Tibial artery (tissue), 4 donors: ENCODE measurements at regions of chr20 and their contacts with region 1.

Region 1: GRCh38 chr20:63707549-63708300 is at the starts of genes ARFRP1 and ZGPAT:
- DNase-seq: peak; percentile 85 to 93
- H3K4me3 ChIP-seq: peak within 1 kb of the TSS; percentile 82 to 83
- H3K27ac ChIP-seq: peak within 1 kb of the TSS; percentile 76 to 86
- H3K4me1 ChIP-seq: peaks cover 0 to 40% (median 28%) of the 10 kb centered on the region in 4 donors
- H3K27me3 ChIP-seq: no peaks in the 10 kb centered on the region
- CTCF ChIP-seq: no peak

Region 2: DNA sequence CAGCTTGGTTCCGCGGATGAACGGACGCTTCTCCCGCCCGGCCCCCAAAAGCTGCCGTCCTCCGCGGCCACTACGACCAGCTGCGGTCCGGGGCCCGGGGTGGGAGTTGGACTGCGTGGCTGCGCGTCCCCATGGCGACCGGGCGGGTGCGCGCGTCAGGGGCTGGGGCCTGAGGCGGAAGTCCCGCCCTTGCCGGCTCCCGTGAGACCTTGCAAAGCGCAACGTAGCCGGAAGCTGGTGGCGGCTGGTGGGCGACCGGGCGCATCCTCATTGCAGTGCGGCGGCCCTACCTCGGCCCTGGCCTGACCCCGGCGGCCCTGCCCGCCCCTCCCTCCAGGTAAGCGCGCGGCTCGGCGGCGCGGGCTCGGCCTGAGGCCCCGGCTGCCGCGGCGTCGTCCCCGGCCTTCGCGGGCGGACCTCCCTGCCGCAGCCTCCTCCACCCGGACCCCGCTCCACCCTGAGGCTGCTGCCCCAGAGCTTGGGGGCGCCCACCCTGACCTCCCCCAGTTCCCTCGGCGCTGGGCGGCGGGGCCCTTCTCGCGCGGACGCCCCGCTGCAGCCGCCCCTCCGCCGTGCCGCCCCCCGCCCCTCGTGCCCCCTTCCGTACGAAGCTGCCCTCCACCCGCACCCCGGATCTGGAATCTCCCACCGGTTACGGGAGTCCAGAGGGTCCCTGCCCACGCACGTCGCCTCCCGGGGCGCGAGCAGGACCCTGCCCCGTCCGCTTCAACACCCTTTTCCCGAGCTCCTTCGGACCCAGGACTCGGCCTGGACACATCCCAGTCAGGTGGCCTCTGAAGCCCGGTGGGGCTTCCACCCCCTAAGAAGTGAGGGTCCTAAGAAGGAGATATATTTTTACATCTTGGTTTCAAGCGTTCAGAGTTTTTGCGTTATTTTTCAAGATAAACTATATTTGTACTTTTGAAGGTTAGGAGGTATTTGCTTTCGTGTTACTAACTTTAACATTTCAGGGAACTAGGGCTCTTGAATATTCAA is 434.8 kb before region 1 on chr20 and contains the start of gene ARFGAP1:
- intact Hi-C with region 1: no loop called
- DNase-seq: peak; percentile 84 to 93
- H3K4me3 ChIP-seq: peak within 1 kb of the TSS; percentile 90 to 100
- H3K27ac ChIP-seq: peak within 1 kb of the TSS; percentile 70 to 83
- H3K4me1 ChIP-seq: peaks cover 0 to 28% (median 23%) of the 10 kb centered on the region in 4 donors
- H3K27me3 ChIP-seq: peaks cover 0 to 8% of the 10 kb centered on the region in 2 donors
- CTCF ChIP-seq: no peak

Region 3: GRCh38 chr20:63602321-63602720 is 105.4 kb before region 1 on chr20:
- intact Hi-C with region 1: no loop called
- DNase-seq: no peak
- H3K4me3 ChIP-seq: no peak overlapping the region
- H3K27ac ChIP-seq: no peak overlapping the region
- H3K4me1 ChIP-seq: no peaks in the 10 kb centered on the region
- H3K27me3 ChIP-seq: no peaks in the 10 kb centered on the region
- CTCF ChIP-seq: no peak

Region 4: DNA sequence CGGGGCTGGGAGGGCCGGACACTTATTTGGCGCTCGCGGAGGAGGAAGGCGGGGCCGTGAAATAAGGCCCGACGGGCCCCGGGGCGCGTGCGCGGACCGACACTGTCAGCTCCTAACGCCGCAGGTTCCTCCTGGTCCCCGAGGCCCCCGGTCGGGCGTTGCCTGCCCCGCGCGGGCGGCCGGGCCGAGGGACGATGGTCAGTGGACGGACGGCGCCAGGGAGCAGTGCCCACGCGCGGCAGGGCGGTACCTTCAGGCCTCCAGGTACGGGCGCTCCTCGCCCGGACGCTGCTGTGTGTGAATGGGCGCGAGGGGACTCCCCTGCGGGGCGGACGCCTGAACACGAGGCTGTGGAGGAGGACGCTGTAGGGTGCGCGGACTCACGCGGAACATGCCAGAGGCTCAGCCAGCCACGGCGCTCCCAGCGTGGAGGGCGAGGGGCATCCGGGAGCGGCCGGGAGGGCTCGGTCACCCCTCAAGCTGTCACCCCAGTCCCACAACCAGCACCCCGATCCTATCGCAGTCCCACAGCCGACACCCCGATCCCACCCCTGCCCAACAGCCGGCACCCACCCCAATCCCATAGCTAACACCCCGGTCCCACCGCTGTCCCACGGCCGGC is 80.5 kb before region 1 on chr20:
- intact Hi-C with region 1: loop called (anchors 5 kb)
- DNase-seq: peak; percentile 92 to 96
- H3K4me3 ChIP-seq: peak overlapping the region; percentile 74 to 75
- H3K27ac ChIP-seq: peak overlapping the region; percentile 93 to 97
- H3K4me1 ChIP-seq: peaks cover 0 to 27% (median 20%) of the 10 kb centered on the region in 4 donors
- H3K27me3 ChIP-seq: no peaks in the 10 kb centered on the region
- CTCF ChIP-seq: no peak

Region 5: DNA sequence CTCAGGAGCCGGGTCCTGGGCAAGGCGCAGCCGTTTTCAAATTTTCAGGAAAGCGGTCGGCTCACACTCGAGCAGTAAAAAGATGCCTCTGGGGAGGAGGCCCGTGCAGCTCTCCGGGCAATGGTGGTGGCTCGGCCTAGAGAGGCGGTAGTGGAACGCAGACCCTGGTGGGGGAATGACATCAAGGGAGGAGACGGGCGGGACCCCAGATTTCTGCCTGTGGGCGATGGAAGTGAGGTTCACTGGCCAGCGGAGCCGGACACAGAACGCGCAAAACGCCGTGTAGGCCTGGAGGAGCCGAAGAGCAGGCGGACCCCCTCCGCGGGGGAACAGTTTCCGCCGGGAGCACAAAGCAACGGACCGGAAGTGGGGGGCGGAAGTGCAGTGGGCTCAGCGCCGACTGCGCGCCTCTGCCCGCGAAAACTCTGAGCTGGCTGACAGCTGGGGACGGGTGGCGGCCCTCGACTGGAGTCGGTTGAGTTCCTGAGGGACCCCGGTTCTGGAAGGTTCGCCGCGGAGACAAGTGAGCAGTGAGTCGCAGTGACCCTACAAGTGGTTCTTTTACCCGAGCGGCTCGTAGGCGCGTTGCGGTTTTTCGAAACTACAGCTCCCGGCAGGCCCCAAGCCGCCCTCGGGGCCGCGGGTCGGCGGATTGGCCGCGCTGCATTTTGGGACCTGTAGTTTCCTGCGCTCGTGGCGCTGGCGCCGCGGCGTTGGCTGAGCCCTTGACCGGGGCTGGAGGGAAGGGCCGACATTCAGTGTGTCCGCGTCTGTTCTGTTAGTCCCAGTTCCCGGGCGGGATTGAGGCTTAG is 49.6 kb before region 1 on chr20 and contains the start of gene RTEL1:
- intact Hi-C with region 1: loop called (anchors 5 kb)
- DNase-seq: peak; percentile 91 to 95
- H3K4me3 ChIP-seq: peak within 1 kb of the TSS; percentile 64 to 76
- H3K27ac ChIP-seq: peak within 1 kb of the TSS; percentile 81 to 86
- H3K4me1 ChIP-seq: peaks cover 0 to 42% (median 30%) of the 10 kb centered on the region in 4 donors
- H3K27me3 ChIP-seq: peaks cover 0 to 5% of the 10 kb centered on the region in 2 donors
- CTCF ChIP-seq: peak in 1 of 2 experiments; percentile 45

Region 6: DNA sequence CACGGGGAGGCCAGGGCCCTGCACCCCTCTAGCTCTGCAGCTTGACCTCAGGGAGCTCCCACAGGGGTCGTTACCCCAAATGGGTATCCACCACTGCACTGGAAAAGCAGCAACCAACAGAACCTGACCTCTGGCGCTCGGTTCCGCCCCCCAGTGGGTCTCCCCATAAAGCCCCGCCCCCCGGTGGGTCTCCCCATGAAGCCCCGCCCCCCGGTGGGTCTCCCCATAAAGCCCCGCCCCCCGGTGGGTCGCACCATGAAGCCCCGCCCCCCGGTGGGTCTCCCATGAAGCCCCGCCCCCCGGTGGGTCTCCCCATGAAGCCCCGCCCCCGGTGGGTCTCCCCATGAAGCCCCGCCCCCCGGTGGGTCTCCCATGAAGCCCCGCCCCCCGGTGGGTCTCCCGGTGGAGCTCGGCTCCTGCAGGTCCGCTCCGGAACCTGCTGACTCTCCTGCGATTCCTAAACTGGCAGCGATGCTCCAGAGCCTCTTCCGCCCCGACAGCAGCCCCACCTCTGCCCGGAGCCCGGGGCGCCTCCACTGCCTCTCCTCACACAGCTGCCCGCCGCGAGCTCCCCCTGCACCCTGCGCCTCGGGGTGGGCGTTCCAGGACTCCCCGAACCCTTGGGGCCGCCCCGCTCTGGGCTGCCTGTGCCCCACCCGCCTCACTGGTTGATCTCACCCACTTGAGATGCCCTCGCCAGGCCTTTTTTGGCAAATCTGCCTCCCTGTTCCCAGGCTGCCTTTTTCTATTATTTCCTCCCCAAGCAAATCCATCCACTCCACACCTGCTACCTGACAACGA is 43.9 kb after region 1 on chr20:
- intact Hi-C with region 1: no loop called
- DNase-seq: no peak
- H3K4me3 ChIP-seq: no peak overlapping the region
- H3K27ac ChIP-seq: no peak overlapping the region
- H3K4me1 ChIP-seq: no peaks in the 10 kb centered on the region
- H3K27me3 ChIP-seq: no peaks in the 10 kb centered on the region
- CTCF ChIP-seq: no peak